ENCODE measurements at regions of chr16 and their contacts with region 1.

Region 1: DNA sequence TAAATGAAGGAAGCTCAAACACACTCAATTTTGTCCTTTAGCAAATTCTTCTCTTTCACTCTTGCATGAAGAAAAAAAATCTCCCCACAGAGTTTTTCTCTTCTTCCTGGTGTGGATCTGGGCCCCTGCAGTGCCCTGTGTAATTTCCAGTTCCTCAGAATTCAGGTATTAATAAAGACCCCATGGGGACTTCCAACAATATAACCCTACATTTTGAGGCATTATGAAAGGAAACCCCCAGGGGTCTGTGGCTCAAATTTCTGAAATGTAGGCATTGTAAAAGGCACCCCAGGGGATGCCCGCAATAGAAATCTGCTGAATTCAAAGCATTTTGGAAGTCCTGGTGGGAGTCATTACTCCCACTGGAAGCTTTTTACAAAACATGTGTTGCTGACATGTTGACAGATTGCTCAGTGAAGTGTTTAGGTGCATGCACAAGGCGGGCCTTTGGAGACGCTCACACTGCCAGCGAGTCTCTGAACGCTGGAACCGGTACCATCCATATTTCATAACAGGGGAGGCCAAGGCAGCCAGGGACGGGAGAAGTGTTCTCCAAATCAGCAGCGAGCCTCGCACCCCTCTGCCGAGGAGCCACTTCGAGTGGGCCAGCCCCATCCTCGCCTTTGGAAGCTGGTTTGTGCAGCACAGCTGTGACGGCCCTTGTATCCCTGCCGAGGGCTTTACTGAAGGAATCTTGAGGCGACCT is 154.0 kb downstream of the ZNF423 start:
- ATAC-seq: peak; percentile 51 to 93 (median 82)
- H3K4me3 ChIP-seq: peak overlapping the region in 4 of 5 donors; percentile 23 to 27 (median 24)
- H3K27ac ChIP-seq: peak overlapping the region; percentile 88 to 93
- H3K4me1 ChIP-seq: peaks cover 71 to 73% of the 10 kb centered on the region in 2 donors

Region 2: DNA sequence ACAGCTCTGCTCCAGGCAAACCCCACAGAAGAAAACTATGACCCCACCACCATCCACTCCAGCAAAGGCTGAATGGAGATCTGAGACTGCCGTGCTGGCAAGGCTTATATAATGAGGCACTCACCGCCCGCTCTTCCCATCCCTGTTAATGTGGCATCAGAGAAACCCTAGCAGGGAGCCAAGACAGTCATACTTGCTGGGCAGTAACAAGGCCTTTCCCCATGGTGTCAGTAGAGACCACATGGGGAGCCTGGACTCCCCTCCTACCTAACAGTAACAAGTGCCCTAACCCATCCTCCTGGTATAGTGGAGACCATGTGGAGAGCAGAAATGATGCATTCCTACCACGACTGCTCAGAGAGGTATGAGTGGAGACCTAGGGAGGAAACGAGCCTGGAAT is 93.2 kb before region 1 on chr16:
- in situ Hi-C with region 1: loop called in 1 of 9 experiments (anchors 25 kb)
- ATAC-seq: peak; percentile 56 to 100 (median 98)
- H3K4me3 ChIP-seq: no peak overlapping the region
- H3K27ac ChIP-seq: no peak overlapping the region
- H3K4me1 ChIP-seq: peaks cover 20 to 24% of the 10 kb centered on the region in 2 donors

Region 3: GRCh38 chr16:49776085-49776595 is 74.2 kb after region 1 on chr16:
- in situ Hi-C with region 1: loop called in 1 of 9 experiments (anchors 25 kb)
- ATAC-seq: peak in 7 of 8 experiments; percentile 9 to 91 (median 87)
- H3K4me3 ChIP-seq: peak overlapping the region in 2 of 5 donors; percentile 4 to 15
- H3K27ac ChIP-seq: peak overlapping the region; percentile 69 to 92
- H3K4me1 ChIP-seq: peaks cover 31 to 54% of the 10 kb centered on the region in 2 donors

Region 4: DNA sequence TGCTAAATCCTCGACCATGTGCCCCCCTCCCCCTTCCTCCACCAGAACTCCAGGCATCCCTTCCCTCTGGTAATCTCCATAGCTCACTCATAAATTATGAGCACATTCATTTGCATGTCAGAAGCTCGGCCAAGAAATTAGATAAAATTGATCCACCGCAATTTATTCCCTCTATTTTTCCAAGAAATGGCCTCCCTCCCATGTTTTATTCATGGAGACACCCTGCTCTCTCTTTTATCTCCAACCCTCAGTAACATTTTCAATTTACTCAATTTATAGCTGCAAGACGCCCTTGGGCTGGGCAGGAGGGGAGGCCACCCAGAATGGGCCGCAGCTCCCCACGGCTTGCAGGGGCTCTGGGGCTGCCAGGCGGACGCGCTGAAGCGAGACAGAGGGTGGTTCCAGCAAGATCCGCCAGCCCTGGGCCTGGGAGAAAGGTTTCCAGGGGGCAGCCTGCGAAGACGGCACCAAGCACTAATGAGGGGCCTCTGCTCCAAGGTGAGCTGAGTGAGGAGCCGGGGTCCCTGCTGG is 208.7 kb after region 1 on chr16:
- in situ Hi-C with region 1: no loop called
- ATAC-seq: peak; percentile 71 to 93 (median 90)
- H3K4me3 ChIP-seq: no peak overlapping the region
- H3K27ac ChIP-seq: peak overlapping the region; percentile 76 to 84
- H3K4me1 ChIP-seq: peaks cover 16 to 23% of the 10 kb centered on the region in 2 donors

Region 5: GRCh38 chr16:50281964-50282538 is 580.1 kb after region 1 on chr16:
- in situ Hi-C with region 1: no loop called
- ATAC-seq: no peak
- H3K4me3 ChIP-seq: no peak overlapping the region
- H3K27ac ChIP-seq: no peak overlapping the region
- H3K4me1 ChIP-seq: no peaks in the 10 kb centered on the region